ENCODE measurements at regions of chr1 and their contacts with region 1.

Region 1: DNA sequence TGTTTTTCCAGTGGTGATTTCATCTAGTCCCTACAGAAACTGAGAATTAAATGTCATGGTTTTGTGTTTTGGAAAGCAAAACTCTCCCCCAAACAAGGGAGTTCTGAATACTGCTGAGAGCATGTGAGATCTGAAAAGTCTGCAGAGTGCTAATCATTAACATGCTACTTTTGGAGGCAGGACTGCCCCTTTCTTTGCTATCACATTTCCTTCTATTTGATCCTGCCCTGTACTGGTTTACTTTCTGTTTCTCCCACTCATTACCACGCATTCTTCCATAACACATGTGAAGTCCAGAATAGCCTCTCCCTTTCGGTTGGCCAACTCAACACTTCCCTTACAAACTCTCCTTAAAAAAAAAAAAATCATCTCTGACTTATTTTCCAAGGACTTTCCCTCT is 63.6 kb downstream of the GADD45A start:
- DNase-seq: peak; percentile 74
- ATAC-seq: peak; percentile 96
- H3K4me3 ChIP-seq: peak overlapping the region in 2 of 3 experiments; percentile 18 to 25; a peak in 2 of 6 replicates
- H3K27ac ChIP-seq: peak overlapping the region; percentile 20
- H3K4me1 ChIP-seq: peaks cover 73% of the 10 kb centered on the region
- H3K27me3 ChIP-seq: no peaks in the 10 kb centered on the region
- CTCF ChIP-seq: no peak
- EP300 ChIP-seq: no peak
- POLR2A ChIP-seq: no peak
- RAD21 ChIP-seq: no peak

Region 2: GRCh38 chr1:67724928-67725560 is 23.6 kb before region 1 on chr1:
- CTCF ChIA-PET with region 1: no interaction called
- POLR2A ChIA-PET with region 1: no interaction called
- in situ Hi-C with region 1: no loop called
- intact Hi-C with region 1: loop called (anchors 1 kb)
- DNase-seq: peak; percentile 63
- ATAC-seq: peak; percentile 74
- H3K4me3 ChIP-seq: no peak overlapping the region
- H3K27ac ChIP-seq: no peak overlapping the region
- H3K4me1 ChIP-seq: peaks cover 36% of the 10 kb centered on the region
- H3K27me3 ChIP-seq: no peaks in the 10 kb centered on the region; a peak in 1 of 5 replicates
- CTCF ChIP-seq: no peak
- EP300 ChIP-seq: no peak
- POLR2A ChIP-seq: no peak
- RAD21 ChIP-seq: no peak

Region 3: GRCh38 chr1:67791686-67792475 is 43.3 kb after region 1 on chr1:
- CTCF ChIA-PET with region 1: no interaction called
- POLR2A ChIA-PET with region 1: no interaction called
- in situ Hi-C with region 1: no loop called
- intact Hi-C with region 1: no loop called
- DNase-seq: no peak
- ATAC-seq: no peak
- H3K4me3 ChIP-seq: no peak overlapping the region
- H3K27ac ChIP-seq: no peak overlapping the region
- H3K4me1 ChIP-seq: no peaks in the 10 kb centered on the region
- H3K27me3 ChIP-seq: peaks cover 0 to 3% of the 10 kb centered on the region in 2 experiments; a peak in 1 of 5 replicates
- CTCF ChIP-seq: no peak
- EP300 ChIP-seq: no peak
- POLR2A ChIP-seq: no peak
- RAD21 ChIP-seq: no peak